Activated naive CD4-positive, alpha-beta T cell treated with anti-CD3 and anti-CD28 coated beads for 36 hours (primary cell): ENCODE measurements at regions of chr17 and their contacts with region 1.

Region 1: GRCh38 chr17:17520599-17521232 is 24.5 kb upstream of the RASD1 start:
- DNase-seq: no peak
- H3K4me3 Mint-ChIP-seq: no peak overlapping the region
- H3K27ac Mint-ChIP-seq: no peak overlapping the region
- H3K4me1 Mint-ChIP-seq: no peaks in the 10 kb centered on the region
- H3K27me3 Mint-ChIP-seq: no peaks in the 10 kb centered on the region

Region 2: DNA sequence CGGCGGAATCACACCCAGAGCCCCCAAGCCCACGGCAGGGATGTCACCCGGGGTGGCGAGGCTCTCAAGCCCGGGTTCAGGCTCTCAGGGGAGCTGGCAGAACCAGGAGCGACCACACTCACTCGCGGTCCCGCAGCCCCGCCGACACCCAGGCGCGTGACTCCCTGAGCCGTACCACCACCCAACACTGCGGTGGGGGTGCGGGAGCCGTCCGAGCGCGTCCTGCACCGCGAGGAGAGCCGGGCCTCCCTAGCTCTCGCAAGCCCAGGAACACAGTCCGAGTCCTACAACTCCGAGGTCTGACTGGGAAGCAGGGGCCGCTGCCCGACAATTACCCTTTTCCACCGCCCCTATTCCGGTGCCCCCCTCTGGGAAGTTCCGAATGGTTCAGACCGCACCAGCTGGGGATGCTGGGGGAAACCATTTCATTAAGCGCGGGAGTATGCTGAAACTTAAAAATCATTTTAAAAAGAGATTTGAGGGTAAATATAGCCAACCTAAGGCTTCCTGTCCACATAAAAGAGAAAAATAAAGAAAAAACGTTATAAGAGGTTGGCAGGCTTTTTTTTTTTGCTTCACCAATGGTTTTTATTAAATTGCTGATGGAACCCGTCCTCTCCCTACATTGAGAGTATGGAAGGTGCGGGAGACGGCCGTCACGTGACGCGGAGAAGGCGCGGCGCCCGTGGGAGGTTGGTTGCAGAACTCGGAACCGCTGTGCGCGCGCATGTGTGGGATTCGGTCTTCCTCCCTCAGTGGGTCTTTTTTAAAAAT is 283.5 kb before region 1 on chr17 and contains the start of gene FLCN:
- CTCF ChIA-PET with region 1: no interaction called
- intact Hi-C with region 1: no loop called
- DNase-seq: peak; percentile 88
- H3K4me3 Mint-ChIP-seq: peak within 1 kb of the TSS; percentile 91
- H3K27ac Mint-ChIP-seq: peak within 1 kb of the TSS; percentile 95
- H3K4me1 Mint-ChIP-seq: peaks cover 31% of the 10 kb centered on the region
- H3K27me3 Mint-ChIP-seq: no peaks in the 10 kb centered on the region
- total RNA-seq, gene FLCN: 17.5 to 18.4 TPM

Region 3: DNA sequence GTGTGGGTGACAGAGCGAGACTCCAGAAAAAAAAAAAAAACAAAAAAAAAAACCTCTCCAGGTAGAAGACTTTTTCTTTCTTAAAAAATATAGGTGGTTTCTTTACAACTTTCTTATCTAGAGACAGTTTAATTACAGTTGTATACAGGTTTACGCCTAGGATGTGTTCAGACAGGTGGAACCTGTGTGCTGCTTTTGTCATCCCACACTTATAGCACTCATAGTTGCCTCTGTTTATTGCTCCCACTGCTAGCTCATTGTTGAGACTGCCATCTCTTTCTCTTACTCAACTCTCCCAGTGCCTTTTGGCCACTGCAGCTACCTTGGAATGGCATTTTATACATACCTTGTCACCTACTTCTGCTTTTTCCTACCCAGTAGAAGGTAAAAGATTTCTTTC is 63.0 kb before region 1 on chr17:
- CTCF ChIA-PET with region 1: no interaction called
- intact Hi-C with region 1: loop called (anchors 2 kb)
- DNase-seq: no peak
- H3K4me3 Mint-ChIP-seq: no peak overlapping the region
- H3K27ac Mint-ChIP-seq: no peak overlapping the region
- H3K4me1 Mint-ChIP-seq: no peaks in the 10 kb centered on the region
- H3K27me3 Mint-ChIP-seq: no peaks in the 10 kb centered on the region

Region 4: GRCh38 chr17:17506811-17507464 is 13.8 kb before region 1 on chr17:
- CTCF ChIA-PET with region 1: no interaction called
- intact Hi-C with region 1: no loop called
- DNase-seq: no peak
- H3K4me3 Mint-ChIP-seq: no peak overlapping the region
- H3K27ac Mint-ChIP-seq: no peak overlapping the region
- H3K4me1 Mint-ChIP-seq: no peaks in the 10 kb centered on the region
- H3K27me3 Mint-ChIP-seq: no peaks in the 10 kb centered on the region